IMR-90 (cell line): ENCODE measurements at regions of chr1 and their contacts with region 1.

Region 1: GRCh38 chr1:154878371-154879022 is 8.4 kb upstream of the KCNN3 start:
- DNase-seq: peak; percentile 62
- ATAC-seq: peak; percentile 99
- H3K4me3 ChIP-seq: no peak overlapping the region
- H3K27ac ChIP-seq: no peak overlapping the region
- H3K4me1 ChIP-seq: peaks cover 1% of the 10 kb centered on the region; the same call in 1 of the 2 replicates
- H3K27me3 ChIP-seq: peaks cover 64% of the 10 kb centered on the region
- CTCF ChIP-seq: peak; percentile 84
- POLR2A ChIP-seq: no peak
- RAD21 ChIP-seq: peak; percentile 94

Region 2: GRCh38 chr1:154669464-154670282 is 208.8 kb before region 1 on chr1:
- CTCF ChIA-PET with region 1: interaction called, 7 read pairs
- POLR2A ChIA-PET with region 1: no interaction called
- dilution Hi-C with region 1: no loop called
- in situ Hi-C with region 1: no loop called
- intact Hi-C with region 1: loop called (anchors 1 kb)
- DNase-seq: peak; percentile 69
- ATAC-seq: peak; percentile 99
- H3K4me3 ChIP-seq: no peak overlapping the region
- H3K27ac ChIP-seq: no peak overlapping the region
- H3K4me1 ChIP-seq: no peaks in the 10 kb centered on the region
- H3K27me3 ChIP-seq: peaks cover 24% of the 10 kb centered on the region
- CTCF ChIP-seq: peak; percentile 78
- POLR2A ChIP-seq: no peak
- RAD21 ChIP-seq: peak; percentile 88